A549 (cell line): ENCODE measurements at regions of chr2 and their contacts with region 1.

Region 1: DNA sequence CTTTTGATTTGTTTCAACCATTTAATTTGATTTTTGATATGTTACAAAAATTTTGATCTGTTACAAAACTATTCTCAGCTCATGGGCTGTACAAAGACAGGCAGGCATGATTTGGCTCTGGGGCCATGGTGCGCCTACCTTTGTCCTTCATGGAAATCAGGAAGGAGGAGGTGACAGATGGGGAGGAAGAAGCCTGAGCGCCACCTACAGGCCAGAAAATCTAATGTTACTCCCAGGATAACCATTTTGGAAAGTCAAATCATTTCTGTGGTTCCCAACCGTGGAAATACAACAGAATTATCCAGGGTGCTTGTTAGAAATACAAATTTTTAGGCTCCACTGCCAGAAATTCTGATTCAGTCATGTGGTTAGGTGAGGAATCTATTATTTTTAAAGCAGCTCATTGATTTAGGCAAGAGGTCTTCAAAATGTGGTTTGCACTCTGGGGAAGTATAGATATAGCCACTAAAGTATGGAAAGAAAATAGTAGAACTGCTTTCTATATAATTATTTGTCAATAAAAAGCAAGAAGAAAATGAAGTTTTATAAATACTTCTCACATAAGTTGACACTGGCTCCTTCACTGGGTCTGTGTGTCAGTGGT is 93.9 kb downstream of the EVA1A start:
- DNase-seq: peak; percentile 50 to 58
- ATAC-seq: peak; percentile 44 to 84; a peak in 3 of 6 replicates
- H3K4me3 ChIP-seq: no peak overlapping the region
- H3K27ac ChIP-seq: no peak overlapping the region
- H3K4me1 ChIP-seq: no peaks in the 10 kb centered on the region
- CTCF ChIP-seq: peak; percentile 60
- EP300 ChIP-seq: no peak
- POLR2A ChIP-seq: no peak
- RAD21 ChIP-seq: peak; percentile 51 to 70; a peak in 4 of 5 replicates

Region 2: GRCh38 chr2:75356865-75357264 is 109.9 kb before region 1 on chr2:
- CTCF ChIA-PET with region 1: no interaction called
- POLR2A ChIA-PET with region 1: no interaction called
- DNase-seq: no peak
- ATAC-seq: no peak
- H3K4me3 ChIP-seq: no peak overlapping the region
- H3K27ac ChIP-seq: no peak overlapping the region
- H3K4me1 ChIP-seq: no peaks in the 10 kb centered on the region
- CTCF ChIP-seq: no peak
- EP300 ChIP-seq: no peak
- POLR2A ChIP-seq: no peak
- RAD21 ChIP-seq: no peak

Region 3: GRCh38 chr2:75480971-75481836 is 14.4 kb after region 1 on chr2:
- CTCF ChIA-PET with region 1: interaction called, 68 read pairs
- POLR2A ChIA-PET with region 1: no interaction called
- DNase-seq: peak in 1 of 2 experiments; percentile 52
- ATAC-seq: peak; percentile 76 to 90; a peak in 5 of 6 replicates
- H3K4me3 ChIP-seq: no peak overlapping the region
- H3K27ac ChIP-seq: no peak overlapping the region
- H3K4me1 ChIP-seq: no peaks in the 10 kb centered on the region
- CTCF ChIP-seq: peak; percentile 32
- EP300 ChIP-seq: no peak
- POLR2A ChIP-seq: no peak
- RAD21 ChIP-seq: peak; percentile 10 to 26; a peak in 1 of 5 replicates

Region 4: GRCh38 chr2:75560768-75561565 is 94.2 kb after region 1 on chr2 and contains the start of gene EVA1A:
- CTCF ChIA-PET with region 1: interaction called, 23 read pairs
- POLR2A ChIA-PET with region 1: no interaction called
- DNase-seq: peak; percentile 16 to 33
- ATAC-seq: peak; percentile 69 to 76
- H3K4me3 ChIP-seq: peak within 1 kb of the TSS; percentile 70
- H3K27ac ChIP-seq: peak within 1 kb of the TSS; percentile 72 to 88
- H3K4me1 ChIP-seq: peaks cover 21% of the 10 kb centered on the region; the same call in 1 of the 3 replicates
- CTCF ChIP-seq: no peak; the same call in 2 of the 3 replicates
- EP300 ChIP-seq: no peak
- POLR2A ChIP-seq: no peak
- RAD21 ChIP-seq: no peak
- polyA plus RNA-seq, gene EVA1A: 2.5 TPM in 2 replicates

Region 5: DNA sequence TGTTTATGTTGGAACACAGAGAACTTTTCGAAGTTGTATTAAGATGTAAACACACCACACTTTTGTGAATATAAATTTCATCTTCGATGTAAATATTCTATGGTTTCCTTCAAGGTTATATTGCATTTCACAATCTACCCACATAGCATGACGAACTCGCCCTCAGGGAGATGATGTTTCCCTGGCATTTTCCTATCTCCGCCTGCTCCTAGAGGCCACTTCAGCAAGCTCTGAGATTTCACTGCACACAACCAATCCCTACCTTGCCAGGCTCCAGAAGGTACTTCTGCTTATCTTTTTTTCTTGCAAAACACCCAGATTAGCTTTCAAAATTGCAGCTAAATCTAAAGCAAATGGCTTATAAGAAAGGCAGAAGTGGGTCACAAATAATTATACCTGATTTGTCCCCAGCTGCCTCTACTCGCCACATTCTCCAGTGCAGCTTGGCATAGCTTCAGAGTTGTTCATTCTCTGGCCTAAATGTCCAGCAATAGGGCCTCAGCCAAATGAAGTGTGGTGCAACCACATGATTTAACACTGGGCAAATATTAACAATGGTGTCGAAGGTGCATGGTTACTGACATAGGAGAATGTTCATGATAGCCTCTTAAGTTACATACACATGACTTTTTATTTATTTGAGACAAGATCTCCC is 147.4 kb after region 1 on chr2:
- CTCF ChIA-PET with region 1: interaction called, 139 read pairs
- POLR2A ChIA-PET with region 1: no interaction called
- DNase-seq: no peak
- ATAC-seq: no peak
- H3K4me3 ChIP-seq: no peak overlapping the region
- H3K27ac ChIP-seq: no peak overlapping the region
- H3K4me1 ChIP-seq: no peaks in the 10 kb centered on the region
- CTCF ChIP-seq: no peak
- EP300 ChIP-seq: no peak
- POLR2A ChIP-seq: no peak
- RAD21 ChIP-seq: no peak

Region 6: GRCh38 chr2:75627895-75628504 is 161.2 kb after region 1 on chr2:
- CTCF ChIA-PET with region 1: interaction called, 53 read pairs
- POLR2A ChIA-PET with region 1: no interaction called
- DNase-seq: peak; percentile 80 to 82
- ATAC-seq: peak; percentile 95 to 97
- H3K4me3 ChIP-seq: no peak overlapping the region
- H3K27ac ChIP-seq: no peak overlapping the region
- H3K4me1 ChIP-seq: no peaks in the 10 kb centered on the region
- CTCF ChIP-seq: peak; percentile 97
- EP300 ChIP-seq: no peak
- POLR2A ChIP-seq: no peak
- RAD21 ChIP-seq: peak; percentile 85 to 92

Region 7: DNA sequence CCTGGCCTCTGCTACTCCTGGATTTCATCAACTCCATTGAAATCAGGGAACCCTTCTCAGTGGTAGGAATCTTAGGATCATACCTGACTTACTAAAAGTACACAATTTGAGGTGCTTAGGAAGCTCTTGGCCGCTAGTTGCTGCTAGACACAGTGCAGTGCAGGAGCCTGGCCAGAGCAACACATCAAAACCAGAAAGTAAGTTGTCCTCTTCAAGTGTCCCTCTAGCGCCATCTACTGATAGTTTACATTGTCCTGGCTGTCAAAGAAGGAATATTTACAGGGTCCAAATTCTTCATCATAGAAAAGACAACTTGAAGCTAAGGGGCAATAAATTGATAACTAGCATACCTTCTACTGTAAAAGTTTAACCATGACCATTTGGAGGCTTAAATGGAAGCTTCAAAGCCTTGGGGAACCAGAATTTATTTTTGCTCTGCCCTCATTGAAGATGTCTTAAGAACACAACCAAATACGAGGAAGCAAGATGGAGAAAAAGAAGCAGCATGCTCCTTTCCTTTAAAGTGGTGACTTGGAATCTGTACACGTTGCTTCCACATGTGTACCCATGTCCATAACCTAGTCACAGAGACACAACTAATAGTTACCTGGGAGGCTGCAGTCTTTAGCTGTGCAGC is 1133.0 kb after region 1 on chr2:
- CTCF ChIA-PET with region 1: no interaction called
- POLR2A ChIA-PET with region 1: no interaction called
- DNase-seq: peak; percentile 4 to 81
- ATAC-seq: peak; percentile 64 to 92; a peak in 5 of 6 replicates
- H3K4me3 ChIP-seq: no peak overlapping the region
- H3K27ac ChIP-seq: no peak overlapping the region
- H3K4me1 ChIP-seq: no peaks in the 10 kb centered on the region
- CTCF ChIP-seq: peak; percentile 45
- EP300 ChIP-seq: no peak
- POLR2A ChIP-seq: no peak
- RAD21 ChIP-seq: peak in 1 of 2 experiments; percentile 67; a peak in 4 of 5 replicates